CD4-positive, alpha-beta T cell (primary cell): ENCODE measurements at regions of chr11 and their contacts with region 1.

Region 1: GRCh38 chr11:45917623-45918330 is at the start of gene PEX16:
- DNase-seq: peak; percentile 87 to 99 (median 94)
- ATAC-seq: peak; percentile 89
- H3K4me3 ChIP-seq: peak within 1 kb of the TSS; percentile 93
- H3K4me3 Mint-ChIP-seq: peak within 1 kb of the TSS; percentile 99
- H3K27ac ChIP-seq: peak within 1 kb of the TSS; percentile 90 to 95
- H3K27ac Mint-ChIP-seq: peak within 1 kb of the TSS; percentile 94
- H3K4me1 ChIP-seq: peaks cover 70% of the 10 kb centered on the region
- H3K4me1 Mint-ChIP-seq: peaks cover 54% of the 10 kb centered on the region
- H3K27me3 ChIP-seq: peaks cover 0 to 6% of the 10 kb centered on the region in 2 experiments
- H3K27me3 Mint-ChIP-seq: peaks cover 5% of the 10 kb centered on the region
- CTCF ChIP-seq: no peak
- total RNA-seq, gene PEX16: 56.3 to 62.0 TPM

Region 2: DNA sequence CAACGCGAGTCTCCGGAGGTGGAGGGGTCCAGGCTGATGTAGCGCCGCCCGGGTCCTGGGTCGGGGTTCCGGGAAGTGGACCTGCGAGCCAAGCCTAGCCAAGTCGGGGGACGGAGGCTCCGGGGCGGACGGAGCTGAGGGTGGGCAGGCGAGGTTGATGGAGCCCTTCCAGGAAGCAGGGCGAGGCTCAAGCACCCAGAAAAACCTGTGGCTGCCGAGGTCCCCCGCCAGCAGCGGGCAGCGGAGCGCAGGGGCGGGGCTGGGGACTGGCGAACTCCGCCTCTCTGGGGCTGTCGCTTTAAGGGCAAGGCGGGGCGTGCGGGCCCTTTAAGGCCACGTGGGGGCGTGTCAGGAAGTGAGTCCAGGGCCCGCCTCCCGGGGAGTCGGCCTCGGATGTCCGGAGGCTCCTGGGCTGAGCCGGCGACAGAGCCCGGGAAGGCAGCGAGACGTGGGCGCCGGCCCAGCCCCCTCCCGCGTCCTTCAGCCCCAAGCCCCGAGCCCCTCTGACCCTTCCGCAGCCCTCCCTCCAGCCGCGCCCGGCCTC is 112.9 kb before region 1 on chr11 and contains the start of gene SLC35C1:
- CTCF ChIA-PET with region 1: no interaction called
- POLR2A ChIA-PET with region 1: interaction called, 6 read pairs
- intact Hi-C with region 1: loop called in 1 of 2 experiments (anchors 1 kb)
- DNase-seq: peak; percentile 90 to 98 (median 96)
- ATAC-seq: peak; percentile 94
- H3K4me3 ChIP-seq: peak within 1 kb of the TSS; percentile 99
- H3K4me3 Mint-ChIP-seq: peak within 1 kb of the TSS; percentile 94
- H3K27ac ChIP-seq: peak within 1 kb of the TSS; percentile 76 to 79
- H3K27ac Mint-ChIP-seq: peak within 1 kb of the TSS; percentile 76
- H3K4me1 ChIP-seq: peaks cover 54% of the 10 kb centered on the region
- H3K4me1 Mint-ChIP-seq: peaks cover 53% of the 10 kb centered on the region
- H3K27me3 ChIP-seq: no peaks in the 10 kb centered on the region
- H3K27me3 Mint-ChIP-seq: no peaks in the 10 kb centered on the region
- CTCF ChIP-seq: no peak
- total RNA-seq, gene SLC35C1: 4.4 to 4.9 TPM

Region 3: DNA sequence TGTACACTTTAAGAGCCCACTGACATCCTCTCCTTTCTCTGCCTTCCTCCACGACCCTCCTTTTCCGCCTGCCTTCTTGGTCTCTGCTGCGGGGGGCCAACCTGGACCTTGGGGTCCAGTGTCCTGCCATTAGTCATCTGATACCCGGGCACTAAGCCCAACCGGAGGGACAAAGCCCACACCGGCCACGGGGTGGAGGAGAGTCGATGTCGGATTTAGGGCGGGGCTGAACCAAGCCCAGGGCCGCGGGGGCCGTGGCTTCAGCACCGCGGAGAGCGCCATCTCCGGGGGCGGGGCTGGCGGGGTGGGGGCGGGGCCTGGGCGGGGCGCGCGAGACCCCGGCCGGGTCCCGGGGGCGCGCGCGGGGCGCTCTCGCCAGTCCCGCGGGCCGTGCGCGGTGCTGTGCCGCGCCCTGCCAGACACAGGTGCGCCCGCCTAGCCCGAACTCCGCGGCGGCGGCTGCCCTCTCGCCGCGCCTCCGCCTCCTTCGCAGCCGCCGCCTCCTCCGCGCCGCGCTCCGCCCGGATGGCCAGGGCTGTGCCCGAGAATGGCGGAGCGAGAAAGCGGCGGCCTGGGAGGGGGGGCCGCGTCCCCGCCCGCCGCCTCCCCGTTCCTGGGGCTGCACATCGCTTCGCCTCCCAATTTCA is 32.4 kb before region 1 on chr11 and contains the start of gene MAPK8IP1:
- CTCF ChIA-PET with region 1: no interaction called
- POLR2A ChIA-PET with region 1: no interaction called
- intact Hi-C with region 1: loop called in 1 of 2 experiments (anchors 1 kb)
- DNase-seq: peak; percentile 14 to 83 (median 46)
- ATAC-seq: peak; percentile 74
- H3K4me3 ChIP-seq: peak within 1 kb of the TSS; percentile 41
- H3K4me3 Mint-ChIP-seq: peak within 1 kb of the TSS; percentile 81
- H3K27ac ChIP-seq: no peak within 1 kb of the TSS
- H3K27ac Mint-ChIP-seq: peak within 1 kb of the TSS; percentile 77
- H3K4me1 ChIP-seq: peaks cover 13% of the 10 kb centered on the region
- H3K4me1 Mint-ChIP-seq: peaks cover 11% of the 10 kb centered on the region
- H3K27me3 ChIP-seq: no peaks in the 10 kb centered on the region
- H3K27me3 Mint-ChIP-seq: peaks cover 5% of the 10 kb centered on the region
- CTCF ChIP-seq: no peak
- total RNA-seq, gene MAPK8IP1: 2.3 to 2.4 TPM

Region 4: GRCh38 chr11:45930031-45930794 is 12.4 kb after region 1 on chr11:
- CTCF ChIA-PET with region 1: interaction called, 3 read pairs
- POLR2A ChIA-PET with region 1: interaction called, 22 read pairs
- intact Hi-C with region 1: no loop called
- DNase-seq: peak in 7 of 14 experiments; percentile 30 to 74 (median 49)
- ATAC-seq: peak; percentile 80
- H3K4me3 ChIP-seq: peak overlapping the region; percentile 7
- H3K4me3 Mint-ChIP-seq: peak overlapping the region; percentile 64
- H3K27ac ChIP-seq: peak overlapping the region; percentile 26 to 68
- H3K27ac Mint-ChIP-seq: peak overlapping the region; percentile 82
- H3K4me1 ChIP-seq: peaks cover 46% of the 10 kb centered on the region
- H3K4me1 Mint-ChIP-seq: peaks cover 25% of the 10 kb centered on the region
- H3K27me3 ChIP-seq: no peaks in the 10 kb centered on the region
- H3K27me3 Mint-ChIP-seq: no peaks in the 10 kb centered on the region
- CTCF ChIP-seq: no peak